GM12878 (cell line): ENCODE measurements at regions of chr4 and their contacts with region 1.

Region 1: GRCh38 chr4:84503495-84504437 is 4.7 kb upstream of the NKX6-1 start:
- DNase-seq: no peak
- ATAC-seq: peak; percentile 95
- H3K4me3 ChIP-seq: no peak overlapping the region
- H3K27ac ChIP-seq: no peak overlapping the region
- H3K4me1 ChIP-seq: no peaks in the 10 kb centered on the region
- H3K27me3 ChIP-seq: peaks cover 7 to 10% of the 10 kb centered on the region in 2 experiments
- CTCF ChIP-seq: peak; percentile 54 to 67 (median 57); a peak in 5 of 6 replicates
- EP300 ChIP-seq: no peak
- POLR2A ChIP-seq: no peak
- RAD21 ChIP-seq: peak; percentile 82

Region 2: DNA sequence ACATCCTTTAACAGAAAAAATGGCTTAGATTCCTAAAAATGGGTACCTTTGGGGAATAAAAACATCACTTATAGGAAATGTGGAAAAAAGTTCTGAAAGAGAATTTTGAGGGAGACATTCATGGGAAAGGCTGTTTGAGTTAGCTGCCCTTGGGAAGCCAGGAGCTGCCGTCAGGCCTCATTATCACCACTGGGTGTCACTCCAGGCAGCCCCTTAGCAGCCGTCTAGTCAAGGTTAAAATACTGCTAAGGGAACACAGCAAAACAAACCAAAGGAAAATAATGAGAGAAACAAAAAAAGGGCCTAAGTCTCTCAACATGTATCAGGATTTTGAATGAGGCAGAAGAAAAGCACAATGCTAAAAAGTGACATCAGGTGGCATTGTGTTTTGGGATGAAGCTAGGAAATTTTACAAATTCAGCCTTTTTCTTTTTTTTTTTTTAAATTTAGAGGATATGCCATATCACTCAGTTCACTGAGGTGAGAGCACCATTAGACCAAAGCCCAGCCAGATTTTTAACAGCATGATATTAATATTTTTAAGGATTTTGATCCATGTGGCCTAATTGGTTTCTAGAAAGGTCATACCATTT is 732.6 kb before region 1 on chr4:
- CTCF ChIA-PET with region 1: no interaction called
- POLR2A ChIA-PET with region 1: no interaction called
- RAD21 ChIA-PET with region 1: no interaction called
- SMC1A ChIA-PET with region 1: no interaction called
- in situ Hi-C with region 1: no loop called
- intact Hi-C with region 1: loop called (anchors 1 kb)
- DNase-seq: no peak
- ATAC-seq: peak; percentile 73
- H3K4me3 ChIP-seq: no peak overlapping the region
- H3K27ac ChIP-seq: no peak overlapping the region
- H3K4me1 ChIP-seq: no peaks in the 10 kb centered on the region
- H3K27me3 ChIP-seq: no peaks in the 10 kb centered on the region
- CTCF ChIP-seq: peak; percentile 42 to 55 (median 48); a peak in 5 of 6 replicates
- EP300 ChIP-seq: no peak
- POLR2A ChIP-seq: no peak
- RAD21 ChIP-seq: peak; percentile 55

Region 3: DNA sequence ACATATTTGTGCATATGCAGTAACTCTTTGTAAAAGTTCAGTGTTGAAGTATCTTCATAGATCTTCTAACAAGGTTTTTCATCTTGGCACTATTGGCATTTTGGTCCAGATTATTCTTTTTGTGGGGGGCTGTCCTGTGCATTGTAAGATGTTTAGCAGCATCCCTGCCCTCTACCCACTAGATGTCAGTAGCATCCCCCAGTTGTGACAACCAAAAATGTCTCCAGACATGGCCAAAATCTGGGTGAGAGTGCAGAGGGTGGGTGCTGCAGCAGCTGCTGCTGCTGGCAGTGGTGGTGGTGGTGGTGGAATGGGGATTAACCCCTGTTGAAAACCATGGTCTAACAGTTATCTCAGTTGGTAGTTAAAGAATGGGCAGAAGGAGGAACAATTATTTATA is 597.8 kb before region 1 on chr4:
- CTCF ChIA-PET with region 1: no interaction called
- POLR2A ChIA-PET with region 1: no interaction called
- RAD21 ChIA-PET with region 1: no interaction called
- SMC1A ChIA-PET with region 1: no interaction called
- in situ Hi-C with region 1: no loop called
- intact Hi-C with region 1: loop called (anchors 1 kb)
- DNase-seq: no peak
- ATAC-seq: peak; percentile 68
- H3K4me3 ChIP-seq: no peak overlapping the region
- H3K27ac ChIP-seq: no peak overlapping the region
- H3K4me1 ChIP-seq: no peaks in the 10 kb centered on the region
- H3K27me3 ChIP-seq: no peaks in the 10 kb centered on the region
- CTCF ChIP-seq: peak; percentile 22 to 42 (median 40); a peak in 4 of 6 replicates
- EP300 ChIP-seq: no peak
- POLR2A ChIP-seq: no peak
- RAD21 ChIP-seq: peak; percentile 65

Region 4: DNA sequence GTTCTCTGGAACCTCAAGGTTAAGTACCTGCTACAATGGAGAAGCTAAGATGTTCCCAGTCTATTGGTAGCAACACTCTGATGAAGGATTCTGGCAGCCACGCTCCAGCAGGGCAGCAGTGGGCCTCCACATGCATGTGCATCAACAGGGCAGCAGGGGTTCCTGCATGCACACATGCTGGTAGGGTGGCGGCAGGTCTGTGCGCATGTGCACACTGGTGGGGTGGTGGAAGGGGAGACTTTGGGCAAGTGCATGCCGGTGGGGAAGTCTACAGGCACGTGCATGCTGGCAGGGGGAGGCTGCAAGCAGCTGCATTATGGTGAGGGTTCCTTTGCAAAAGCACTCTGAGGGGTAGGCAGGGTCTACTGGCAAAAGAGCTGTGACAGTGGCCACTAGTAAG is 165.4 kb before region 1 on chr4:
- CTCF ChIA-PET with region 1: no interaction called
- POLR2A ChIA-PET with region 1: no interaction called
- RAD21 ChIA-PET with region 1: no interaction called
- SMC1A ChIA-PET with region 1: no interaction called
- in situ Hi-C with region 1: no loop called
- intact Hi-C with region 1: no loop called
- DNase-seq: no peak
- ATAC-seq: no peak
- H3K4me3 ChIP-seq: no peak overlapping the region
- H3K27ac ChIP-seq: no peak overlapping the region
- H3K4me1 ChIP-seq: no peaks in the 10 kb centered on the region
- H3K27me3 ChIP-seq: no peaks in the 10 kb centered on the region
- CTCF ChIP-seq: no peak
- EP300 ChIP-seq: no peak
- POLR2A ChIP-seq: no peak
- RAD21 ChIP-seq: no peak

Region 5: DNA sequence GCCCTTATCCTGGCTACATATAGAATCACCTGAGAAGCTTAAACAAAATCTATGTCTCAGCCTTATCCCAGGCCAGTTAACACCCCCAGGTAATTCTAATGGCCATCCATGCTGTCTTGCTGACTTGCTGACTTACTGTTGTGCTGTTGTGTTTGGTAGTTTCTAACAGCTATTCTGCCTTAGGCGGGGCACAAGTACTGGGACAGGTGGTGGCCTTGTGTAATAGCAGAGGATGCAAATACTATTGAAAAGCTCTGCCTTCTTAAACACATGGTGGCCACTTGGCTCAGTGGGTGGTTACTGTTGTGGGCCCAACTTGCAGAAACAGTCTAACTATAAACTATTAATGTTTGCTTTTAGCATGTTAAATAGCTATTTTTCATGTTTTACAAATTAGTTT is 135.4 kb after region 1 on chr4:
- CTCF ChIA-PET with region 1: no interaction called
- POLR2A ChIA-PET with region 1: no interaction called
- RAD21 ChIA-PET with region 1: no interaction called
- SMC1A ChIA-PET with region 1: no interaction called
- in situ Hi-C with region 1: no loop called
- intact Hi-C with region 1: no loop called
- DNase-seq: no peak
- ATAC-seq: no peak
- H3K4me3 ChIP-seq: no peak overlapping the region
- H3K27ac ChIP-seq: no peak overlapping the region
- H3K4me1 ChIP-seq: no peaks in the 10 kb centered on the region
- H3K27me3 ChIP-seq: no peaks in the 10 kb centered on the region
- CTCF ChIP-seq: no peak
- EP300 ChIP-seq: no peak
- POLR2A ChIP-seq: no peak
- RAD21 ChIP-seq: no peak

Region 6: DNA sequence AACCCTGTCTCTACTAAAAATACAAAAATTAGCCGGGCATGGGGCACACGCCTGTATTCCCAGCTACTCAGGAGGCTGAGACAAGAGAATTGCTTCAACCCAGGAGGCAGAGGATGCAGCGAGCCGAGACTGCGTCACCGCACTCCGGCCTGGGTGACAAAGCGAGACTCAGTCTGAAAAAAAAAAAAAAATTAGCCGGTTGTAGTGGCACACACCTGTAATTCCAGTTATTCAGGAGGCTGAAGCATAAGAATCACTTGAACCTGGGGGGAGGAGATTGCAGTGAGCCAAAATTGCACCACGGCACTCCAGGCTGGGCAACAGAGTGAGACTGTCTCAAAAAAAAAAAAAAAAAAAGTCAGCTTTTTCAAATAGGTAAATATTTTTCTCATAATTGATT is 390.8 kb after region 1 on chr4:
- CTCF ChIA-PET with region 1: no interaction called
- POLR2A ChIA-PET with region 1: no interaction called
- RAD21 ChIA-PET with region 1: no interaction called
- SMC1A ChIA-PET with region 1: no interaction called
- in situ Hi-C with region 1: no loop called
- intact Hi-C with region 1: no loop called
- DNase-seq: no peak
- ATAC-seq: no peak
- H3K4me3 ChIP-seq: no peak overlapping the region
- H3K27ac ChIP-seq: no peak overlapping the region
- H3K4me1 ChIP-seq: no peaks in the 10 kb centered on the region
- H3K27me3 ChIP-seq: no peaks in the 10 kb centered on the region
- CTCF ChIP-seq: no peak
- EP300 ChIP-seq: no peak
- POLR2A ChIP-seq: no peak
- RAD21 ChIP-seq: no peak